Activated CD4-positive, alpha-beta memory T cell treated with anti-CD3 and anti-CD28 coated beads for 36 hours (primary cell): ENCODE measurements at regions of chr11 and their contacts with region 1.

Region 1: DNA sequence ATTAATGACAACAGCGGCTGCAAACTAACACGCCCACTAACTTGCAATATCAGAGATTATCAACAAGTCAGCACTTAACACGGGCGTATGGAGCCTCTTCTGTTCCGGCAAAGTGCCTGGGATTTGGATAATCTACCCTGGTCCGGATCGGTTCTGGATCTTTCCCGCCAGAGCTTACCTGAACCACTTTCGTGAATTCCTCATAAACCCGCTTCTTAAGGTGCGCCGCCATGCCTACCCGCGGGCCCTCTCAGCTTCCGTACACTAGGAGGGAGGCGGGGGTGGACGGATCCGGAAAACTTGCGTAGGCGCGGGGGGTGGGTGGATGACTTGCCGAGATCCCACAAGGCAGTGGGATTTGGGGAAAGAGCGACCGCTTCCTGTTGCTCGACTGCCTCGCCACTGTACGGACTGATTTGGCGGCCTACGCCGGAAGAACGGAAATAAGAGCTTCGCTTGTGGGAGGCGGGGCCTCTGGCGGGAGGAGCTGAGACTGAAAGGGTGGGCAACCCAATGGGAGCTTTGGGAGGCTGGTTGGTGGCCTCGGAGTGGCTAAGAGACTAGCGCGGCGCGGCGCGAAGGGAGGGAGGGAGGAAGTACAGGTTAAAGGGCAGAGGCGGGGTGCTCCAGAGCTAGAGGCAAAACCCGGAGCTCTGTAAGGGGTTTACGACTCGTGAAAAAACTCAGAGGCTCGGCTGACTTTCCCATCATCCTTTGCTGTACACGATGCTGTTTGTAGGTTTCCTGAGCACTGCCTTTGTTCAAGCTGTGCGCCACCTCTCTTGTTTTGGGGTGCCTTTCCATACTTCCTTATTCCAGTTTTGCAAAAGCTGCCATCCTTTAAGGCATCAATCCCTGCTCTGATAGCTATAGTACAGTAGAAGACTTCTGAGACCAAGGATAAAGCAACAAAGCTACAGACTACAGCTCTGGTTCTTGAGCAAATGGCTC is at the start of gene INTS4:
- DNase-seq: peak; percentile 99
- H3K4me3 Mint-ChIP-seq: peak within 1 kb of the TSS; percentile 89
- H3K27ac Mint-ChIP-seq: peak within 1 kb of the TSS; percentile 93
- H3K4me1 Mint-ChIP-seq: peaks cover 27% of the 10 kb centered on the region
- H3K27me3 Mint-ChIP-seq: no peaks in the 10 kb centered on the region
- total RNA-seq, gene INTS4: 53.5 to 55.3 TPM

Region 2: DNA sequence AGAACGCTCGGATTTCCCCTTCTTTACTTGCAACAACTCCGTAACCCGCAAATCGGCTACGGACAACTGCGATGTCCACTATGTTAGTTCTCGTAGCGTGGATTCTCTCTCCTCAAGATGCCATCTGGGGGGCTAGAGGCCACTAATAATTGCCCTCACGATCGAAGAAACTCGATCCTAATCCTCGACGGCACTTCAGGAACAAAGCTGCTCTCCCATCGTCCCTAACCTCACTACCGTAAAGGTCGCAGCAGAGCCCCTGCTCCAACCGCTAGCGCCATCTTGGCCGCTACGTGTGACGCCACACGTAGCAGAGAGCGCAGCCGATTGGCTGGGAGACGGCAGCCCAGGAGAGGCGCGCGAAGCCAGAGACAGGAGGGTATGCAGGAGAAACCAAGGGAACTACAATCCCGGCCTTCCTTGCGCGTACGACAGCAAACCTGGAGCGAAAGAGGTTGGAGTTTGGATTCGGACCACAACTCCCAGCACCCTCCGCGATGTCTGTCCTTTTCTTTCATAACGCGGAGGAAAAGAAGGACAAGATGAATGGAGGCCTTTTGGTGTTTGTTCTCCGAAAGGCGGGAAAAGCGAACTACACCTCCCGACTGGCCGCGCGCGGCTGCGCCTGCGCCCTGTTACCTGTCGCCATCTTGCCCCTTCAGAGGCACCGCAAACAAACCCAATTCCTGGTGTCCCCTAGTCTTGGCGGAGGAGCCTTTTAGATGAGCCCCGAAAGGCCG is 1550.1 kb before region 1 on chr11 and contains the start of gene EMSY:
- CTCF ChIA-PET with region 1: no interaction called
- POLR2A ChIA-PET with region 1: no interaction called
- intact Hi-C with region 1: loop called (anchors 10 kb)
- DNase-seq: peak; percentile 95
- H3K4me3 Mint-ChIP-seq: peak within 1 kb of the TSS; percentile 98
- H3K27ac Mint-ChIP-seq: peak within 1 kb of the TSS; percentile 91
- H3K4me1 Mint-ChIP-seq: peaks cover 33% of the 10 kb centered on the region
- H3K27me3 Mint-ChIP-seq: no peaks in the 10 kb centered on the region
- total RNA-seq, gene EMSY: 23.5 to 25.4 TPM

Region 3: GRCh38 chr11:77820563-77821348 is 173.9 kb before region 1 on chr11 and contains the starts of genes AAMDC and RSF1:
- CTCF ChIA-PET with region 1: interaction called, 6 read pairs
- POLR2A ChIA-PET with region 1: interaction called, 10 read pairs
- intact Hi-C with region 1: loop called (anchors 1 kb)
- DNase-seq: peak; percentile 98
- H3K4me3 Mint-ChIP-seq: peak within 1 kb of the TSS; percentile 97
- H3K27ac Mint-ChIP-seq: peak within 1 kb of the TSS; percentile 98
- H3K4me1 Mint-ChIP-seq: peaks cover 34% of the 10 kb centered on the region
- H3K27me3 Mint-ChIP-seq: no peaks in the 10 kb centered on the region
- total RNA-seq, gene AAMDC: 9.5 to 10.0 TPM
- total RNA-seq, gene RSF1: 48.7 to 52.9 TPM

Region 4: DNA sequence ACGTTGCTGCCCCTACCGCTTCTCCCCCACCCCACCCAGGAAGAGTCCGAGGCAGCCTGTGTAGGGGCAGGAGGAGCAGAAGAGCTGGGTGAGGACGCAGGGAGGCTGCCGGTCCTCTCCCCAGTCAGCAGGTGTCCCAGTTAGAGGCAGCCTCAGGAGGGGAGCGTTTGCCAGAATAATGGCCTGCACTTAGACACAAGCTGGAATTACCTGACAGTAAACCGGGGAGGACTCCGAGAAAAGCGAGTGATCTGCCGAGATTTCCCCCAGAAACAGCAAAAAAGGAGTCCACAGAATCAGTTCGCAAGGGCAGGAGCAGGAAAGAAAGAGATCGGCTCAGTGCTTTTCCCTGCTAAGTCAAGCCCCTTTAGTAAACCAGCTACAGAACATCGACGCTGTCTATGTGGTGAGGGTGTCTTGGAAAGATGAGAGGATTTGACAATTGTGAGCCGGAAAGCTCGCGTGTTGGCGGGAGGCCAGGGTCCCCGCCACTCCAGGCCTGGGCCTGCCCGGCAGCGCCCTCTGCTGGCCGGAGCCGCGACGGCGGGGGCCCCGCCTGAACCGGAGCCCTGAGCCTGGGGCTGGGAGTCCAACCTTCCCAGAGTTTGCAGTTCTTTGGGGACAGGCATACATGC is 51.3 kb after region 1 on chr11:
- CTCF ChIA-PET with region 1: interaction called, 19 read pairs
- POLR2A ChIA-PET with region 1: no interaction called
- intact Hi-C with region 1: no loop called
- DNase-seq: peak; percentile 82
- H3K4me3 Mint-ChIP-seq: peak overlapping the region; percentile 26
- H3K27ac Mint-ChIP-seq: no peak overlapping the region
- H3K4me1 Mint-ChIP-seq: peaks cover 12% of the 10 kb centered on the region
- H3K27me3 Mint-ChIP-seq: no peaks in the 10 kb centered on the region

Region 5: DNA sequence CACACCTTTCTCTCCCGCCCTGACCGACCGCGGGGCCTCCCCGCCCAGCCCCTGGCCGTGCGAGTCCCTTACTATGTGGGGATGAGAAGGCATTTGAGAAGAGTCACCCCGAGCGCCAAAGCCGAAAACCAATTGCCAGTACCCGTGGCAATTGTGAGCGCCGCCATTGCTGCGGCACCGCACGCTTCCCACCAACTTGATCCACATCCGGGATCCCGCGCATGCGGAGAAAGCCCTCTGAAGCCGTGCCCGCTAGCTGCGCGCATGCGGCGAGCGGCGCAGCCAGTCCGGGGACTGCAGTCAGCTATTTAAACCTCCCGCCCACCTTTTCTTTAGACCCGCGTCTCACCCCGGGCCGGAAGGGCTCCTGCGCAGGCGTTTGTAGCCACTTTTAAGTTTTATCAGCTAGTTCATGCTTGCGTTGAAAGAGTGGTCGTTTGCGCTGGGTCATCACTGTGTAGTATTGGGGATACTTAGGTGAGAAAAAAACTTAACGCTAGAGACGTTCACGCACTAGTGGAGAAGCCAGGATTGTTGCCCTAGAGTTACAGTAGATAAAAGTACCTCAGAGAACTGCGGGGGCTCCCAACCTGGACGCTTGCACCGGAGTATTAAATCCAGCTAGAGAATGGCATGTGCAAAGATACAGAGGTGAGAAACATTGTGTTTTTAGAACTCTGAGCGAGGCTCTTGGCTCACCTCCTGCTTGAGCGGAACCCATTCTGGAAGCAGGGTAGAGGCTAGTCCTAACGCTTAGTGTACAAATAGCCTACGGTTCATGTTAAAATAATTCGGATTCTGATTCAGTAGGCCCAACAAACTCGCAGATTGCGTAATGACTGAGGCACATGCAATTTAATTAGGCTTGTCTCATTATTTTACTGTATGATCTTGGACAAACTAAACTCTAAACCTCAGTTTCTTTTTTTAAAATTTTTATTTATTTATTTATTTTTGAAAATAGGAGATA is 145.0 kb after region 1 on chr11 and contains the start of gene ALG8:
- CTCF ChIA-PET with region 1: interaction called, 4 read pairs
- POLR2A ChIA-PET with region 1: interaction called, 16 read pairs
- intact Hi-C with region 1: loop called (anchors 1 kb)
- DNase-seq: peak; percentile 98
- H3K4me3 Mint-ChIP-seq: peak within 1 kb of the TSS; percentile 81
- H3K27ac Mint-ChIP-seq: peak within 1 kb of the TSS; percentile 93
- H3K4me1 Mint-ChIP-seq: peaks cover 34% of the 10 kb centered on the region
- H3K27me3 Mint-ChIP-seq: no peaks in the 10 kb centered on the region
- total RNA-seq, gene ALG8: 45.8 to 45.9 TPM